Naive thymus-derived CD4-positive, alpha-beta T cell (primary cell): ENCODE measurements at regions of chr11 and their contacts with region 1.

Region 1: GRCh38 chr11:62542750-62543567 is 3.6 kb downstream of the AHNAK start:
- DNase-seq: peak; percentile 37 to 84 (median 66)
- ATAC-seq: peak; percentile 61
- H3K4me3 ChIP-seq: peak overlapping the region; percentile 87
- H3K4me3 Mint-ChIP-seq: peak overlapping the region; percentile 48 to 100 (median 75)
- H3K27ac ChIP-seq: peak overlapping the region; percentile 84
- H3K27ac Mint-ChIP-seq: peak overlapping the region; percentile 2 to 95 (median 70)
- H3K4me1 ChIP-seq: peaks cover 39 to 56% of the 10 kb centered on the region in 2 donors
- H3K4me1 Mint-ChIP-seq: peaks cover 36 to 82% (median 63%) of the 10 kb centered on the region in 7 donors
- H3K27me3 ChIP-seq: no peaks in the 10 kb centered on the region
- H3K27me3 Mint-ChIP-seq: peaks cover 0 to 5% (median 0%) of the 10 kb centered on the region in 5 donors

Region 2: DNA sequence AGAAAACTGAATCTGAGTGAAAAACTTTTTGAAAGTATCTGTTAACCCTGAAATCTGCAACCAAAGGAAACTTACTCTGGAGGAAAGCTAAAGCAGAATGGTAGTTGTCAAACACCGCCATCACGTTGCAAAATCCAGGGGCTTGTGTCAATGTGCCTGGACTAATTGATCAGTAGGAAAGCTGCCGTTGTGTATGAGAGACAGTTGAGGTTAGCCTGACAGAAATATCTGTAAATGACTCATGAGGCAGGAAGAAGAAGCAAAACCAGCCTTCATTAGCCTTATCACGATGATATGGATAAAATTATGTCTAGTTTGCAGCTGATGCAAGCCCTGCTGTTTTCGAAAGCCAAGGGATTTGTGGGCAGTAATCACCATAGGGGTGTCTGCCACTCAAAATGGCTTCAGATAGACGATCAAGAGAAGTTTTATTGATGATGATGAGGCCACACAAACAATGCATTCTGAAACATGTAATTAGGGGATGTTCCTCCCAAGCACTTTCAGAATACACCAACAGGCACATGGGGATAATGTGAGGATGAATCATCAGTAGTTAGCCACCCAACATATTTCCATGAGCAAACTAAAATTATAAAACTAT is 115.2 kb before region 1 on chr11:
- CTCF ChIA-PET with region 1: interaction called, 21 read pairs
- POLR2A ChIA-PET with region 1: interaction called, 4 read pairs
- intact Hi-C with region 1: loop called (anchors 1 kb)
- DNase-seq: peak in 1 of 9 donors; percentile 34
- ATAC-seq: peak; percentile 54
- H3K4me3 ChIP-seq: no peak overlapping the region
- H3K4me3 Mint-ChIP-seq: peak overlapping the region in 3 of 10 donors; percentile 19 to 61 (median 43)
- H3K27ac ChIP-seq: no peak overlapping the region
- H3K27ac Mint-ChIP-seq: peak overlapping the region in 6 of 9 donors; percentile 26 to 91 (median 87)
- H3K4me1 ChIP-seq: peaks cover 19 to 24% of the 10 kb centered on the region in 2 donors
- H3K4me1 Mint-ChIP-seq: peaks cover 24 to 65% (median 32%) of the 10 kb centered on the region in 7 donors
- H3K27me3 ChIP-seq: no peaks in the 10 kb centered on the region
- H3K27me3 Mint-ChIP-seq: peaks cover 0 to 5% (median 0%) of the 10 kb centered on the region in 5 donors

Region 3: DNA sequence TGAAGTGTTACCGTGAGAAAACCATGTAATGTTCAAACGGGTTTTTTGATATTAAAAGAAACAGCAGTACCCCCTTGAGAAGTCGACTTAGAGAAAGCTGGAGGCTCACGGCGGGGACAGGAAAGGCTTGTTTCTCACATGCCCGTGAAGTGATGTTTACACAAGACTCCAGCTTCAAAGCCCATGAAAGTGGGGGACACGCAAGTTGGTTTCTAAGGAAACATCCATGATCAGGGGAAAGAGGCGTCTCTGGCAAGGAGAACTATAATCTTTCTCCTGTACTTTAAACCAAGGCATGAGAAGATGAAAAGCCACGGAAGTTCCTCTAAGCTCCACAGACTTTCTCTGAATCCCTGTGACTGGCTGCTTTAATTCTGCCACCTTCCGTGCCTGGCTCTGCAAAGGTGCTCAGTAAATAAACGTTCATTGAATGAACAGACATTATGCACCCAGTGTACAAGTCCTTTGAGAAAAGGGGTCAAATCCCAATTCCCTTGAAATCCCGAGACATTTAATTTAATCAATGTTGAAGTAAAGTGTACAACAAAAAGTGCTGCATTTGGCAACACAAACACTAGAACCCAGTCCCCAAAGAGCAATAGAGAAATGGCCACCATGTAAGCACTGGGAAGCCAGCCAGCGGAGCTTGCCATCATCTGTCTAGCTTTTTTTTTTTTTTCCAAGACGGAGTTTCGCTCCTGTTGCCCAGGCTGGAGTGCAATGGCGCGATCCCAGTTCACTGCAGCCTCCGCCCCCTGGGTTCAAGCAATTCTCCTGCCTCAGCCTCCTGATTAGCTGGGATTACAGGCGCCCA is 55.0 kb before region 1 on chr11:
- CTCF ChIA-PET with region 1: no interaction called
- POLR2A ChIA-PET with region 1: no interaction called
- intact Hi-C with region 1: no loop called
- DNase-seq: no peak
- ATAC-seq: no peak
- H3K4me3 ChIP-seq: no peak overlapping the region
- H3K4me3 Mint-ChIP-seq: peak overlapping the region in 1 of 10 donors; percentile 29
- H3K27ac ChIP-seq: no peak overlapping the region
- H3K27ac Mint-ChIP-seq: peak overlapping the region in 5 of 9 donors; percentile 7 to 67 (median 25)
- H3K4me1 ChIP-seq: peaks cover 0 to 5% of the 10 kb centered on the region in 2 donors
- H3K4me1 Mint-ChIP-seq: peaks cover 0 to 9% (median 2%) of the 10 kb centered on the region in 7 donors
- H3K27me3 ChIP-seq: no peaks in the 10 kb centered on the region
- H3K27me3 Mint-ChIP-seq: peaks cover 0 to 2% (median 0%) of the 10 kb centered on the region in 5 donors

Region 4: GRCh38 chr11:62567018-62567633 is 24.2 kb after region 1 on chr11:
- CTCF ChIA-PET with region 1: interaction called, 40 read pairs
- POLR2A ChIA-PET with region 1: no interaction called
- intact Hi-C with region 1: no loop called
- DNase-seq: no peak
- ATAC-seq: peak; percentile 41
- H3K4me3 ChIP-seq: no peak overlapping the region
- H3K4me3 Mint-ChIP-seq: no peak overlapping the region
- H3K27ac ChIP-seq: no peak overlapping the region
- H3K27ac Mint-ChIP-seq: peak overlapping the region in 7 of 9 donors; percentile 28 to 81 (median 56)
- H3K4me1 ChIP-seq: peaks cover under 1 to 4% of the 10 kb centered on the region in 2 donors
- H3K4me1 Mint-ChIP-seq: peaks cover 20 to 51% (median 45%) of the 10 kb centered on the region in 7 donors
- H3K27me3 ChIP-seq: no peaks in the 10 kb centered on the region
- H3K27me3 Mint-ChIP-seq: no peaks in the 10 kb centered on the region

Region 5: GRCh38 chr11:63023841-63024648 is 481.1 kb after region 1 on chr11:
- CTCF ChIA-PET with region 1: no interaction called
- POLR2A ChIA-PET with region 1: no interaction called
- intact Hi-C with region 1: no loop called
- DNase-seq: peak; percentile 51 to 86 (median 72)
- ATAC-seq: peak; percentile 98
- H3K4me3 ChIP-seq: no peak overlapping the region
- H3K4me3 Mint-ChIP-seq: peak overlapping the region in 1 of 10 donors; percentile 12
- H3K27ac ChIP-seq: no peak overlapping the region
- H3K27ac Mint-ChIP-seq: no peak overlapping the region
- H3K4me1 ChIP-seq: no peaks in the 10 kb centered on the region
- H3K4me1 Mint-ChIP-seq: peaks cover 0 to 6% (median 4%) of the 10 kb centered on the region in 7 donors
- H3K27me3 ChIP-seq: no peaks in the 10 kb centered on the region
- H3K27me3 Mint-ChIP-seq: peaks cover 5 to 28% (median 19%) of the 10 kb centered on the region in 5 donors